ENCODE measurements at regions of chr5 and their contacts with region 1.

Region 1: GRCh38 chr5:91419571-91420537 is 36.7 kb upstream of the ARRDC3 start:
- DNase-seq: peak; percentile 73
- H3K4me3 Mint-ChIP-seq: no peak overlapping the region
- H3K27ac Mint-ChIP-seq: no peak overlapping the region
- H3K4me1 Mint-ChIP-seq: no peaks in the 10 kb centered on the region
- H3K27me3 Mint-ChIP-seq: no peaks in the 10 kb centered on the region
- CTCF ChIP-seq: peak; percentile 75

Region 2: GRCh38 chr5:90014420-90014819 is 1405.4 kb before region 1 on chr5:
- CTCF ChIA-PET with region 1: no interaction called
- POLR2A ChIA-PET with region 1: no interaction called
- intact Hi-C with region 1: no loop called
- DNase-seq: no peak
- H3K4me3 Mint-ChIP-seq: no peak overlapping the region
- H3K27ac Mint-ChIP-seq: no peak overlapping the region
- H3K4me1 Mint-ChIP-seq: peaks cover 8% of the 10 kb centered on the region
- H3K27me3 Mint-ChIP-seq: no peaks in the 10 kb centered on the region
- CTCF ChIP-seq: no peak

Region 3: GRCh38 chr5:90326995-90327394 is 1092.9 kb before region 1 on chr5:
- CTCF ChIA-PET with region 1: no interaction called
- POLR2A ChIA-PET with region 1: no interaction called
- intact Hi-C with region 1: no loop called
- DNase-seq: no peak
- H3K4me3 Mint-ChIP-seq: no peak overlapping the region
- H3K27ac Mint-ChIP-seq: no peak overlapping the region
- H3K4me1 Mint-ChIP-seq: no peaks in the 10 kb centered on the region
- H3K27me3 Mint-ChIP-seq: peaks cover 55% of the 10 kb centered on the region
- CTCF ChIP-seq: no peak

Region 4: DNA sequence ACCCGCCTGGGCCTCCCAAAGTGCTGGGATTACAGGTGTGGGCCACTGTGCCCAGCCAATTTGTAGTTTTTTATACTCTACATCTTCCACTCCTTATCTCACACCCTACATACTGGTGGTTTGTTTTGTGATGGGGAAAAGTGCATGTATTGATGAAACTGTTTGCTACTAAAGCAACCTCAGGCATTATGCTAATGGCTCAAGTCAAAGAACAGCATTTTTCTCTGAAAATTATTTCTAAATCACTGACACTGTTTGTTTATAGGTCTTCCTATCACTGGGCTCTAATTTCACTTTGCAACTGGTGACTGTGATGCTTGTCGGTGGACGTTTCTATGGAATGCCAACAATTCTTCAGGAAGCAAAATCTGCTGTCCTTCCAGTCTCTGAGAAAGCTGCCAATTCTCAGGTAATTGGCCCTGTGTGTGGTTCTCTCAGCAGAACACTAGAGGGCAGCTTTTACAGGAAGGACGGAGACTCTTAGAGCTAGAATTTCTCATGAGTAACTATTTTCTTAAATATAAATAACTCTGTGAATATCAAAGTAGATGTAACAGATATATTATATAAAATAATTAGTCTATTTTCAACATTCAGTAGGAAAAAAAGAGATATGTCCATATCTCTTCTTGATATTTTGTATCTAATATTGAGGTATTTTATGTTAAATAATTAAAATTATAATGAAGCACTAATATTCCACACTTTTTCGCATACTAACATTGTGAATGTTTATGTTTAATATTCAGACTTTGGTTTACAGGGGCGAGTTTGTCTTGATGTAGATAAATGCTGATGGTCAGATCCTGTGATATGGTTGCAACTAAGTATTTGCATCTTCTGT is 617.2 kb before region 1 on chr5:
- CTCF ChIA-PET with region 1: interaction called, 67 read pairs
- POLR2A ChIA-PET with region 1: no interaction called
- intact Hi-C with region 1: loop called (anchors 5 kb)
- DNase-seq: peak; percentile 62
- H3K4me3 Mint-ChIP-seq: no peak overlapping the region
- H3K27ac Mint-ChIP-seq: no peak overlapping the region
- H3K4me1 Mint-ChIP-seq: no peaks in the 10 kb centered on the region
- H3K27me3 Mint-ChIP-seq: peaks cover 14% of the 10 kb centered on the region
- CTCF ChIP-seq: peak; percentile 65

Region 5: GRCh38 chr5:90866333-90866732 is 553.5 kb before region 1 on chr5:
- CTCF ChIA-PET with region 1: interaction called, 64 read pairs
- POLR2A ChIA-PET with region 1: interaction called, 4 read pairs
- intact Hi-C with region 1: loop called (anchors 1 kb)
- DNase-seq: peak; percentile 29
- H3K4me3 Mint-ChIP-seq: no peak overlapping the region
- H3K27ac Mint-ChIP-seq: no peak overlapping the region
- H3K4me1 Mint-ChIP-seq: no peaks in the 10 kb centered on the region
- H3K27me3 Mint-ChIP-seq: no peaks in the 10 kb centered on the region
- CTCF ChIP-seq: peak; percentile 39

Region 6: DNA sequence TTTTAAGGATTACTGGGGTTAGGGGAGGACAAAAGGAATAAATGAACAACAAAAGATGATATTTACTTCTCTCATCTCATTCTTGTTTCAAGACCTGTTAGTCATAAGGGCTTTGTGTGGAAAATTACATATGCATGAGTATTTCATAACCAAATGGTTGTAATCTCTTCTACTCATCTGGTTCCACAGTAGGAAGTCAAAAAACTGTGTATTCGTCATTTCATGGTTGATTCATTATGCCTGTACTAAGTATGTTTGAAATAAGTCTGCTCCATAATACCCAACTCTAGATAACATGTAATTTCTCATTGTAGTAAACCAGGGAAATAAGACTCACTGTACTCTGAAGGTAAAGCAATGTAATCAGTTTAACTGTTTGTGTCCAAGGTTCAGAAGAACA is 249.6 kb before region 1 on chr5:
- CTCF ChIA-PET with region 1: no interaction called
- POLR2A ChIA-PET with region 1: no interaction called
- intact Hi-C with region 1: no loop called
- DNase-seq: peak; percentile 39
- H3K4me3 Mint-ChIP-seq: no peak overlapping the region
- H3K27ac Mint-ChIP-seq: peak overlapping the region; percentile 8
- H3K4me1 Mint-ChIP-seq: peaks cover 9% of the 10 kb centered on the region
- H3K27me3 Mint-ChIP-seq: no peaks in the 10 kb centered on the region
- CTCF ChIP-seq: no peak

Region 7: GRCh38 chr5:91225848-91226686 is 193.8 kb before region 1 on chr5:
- CTCF ChIA-PET with region 1: interaction called, 7 read pairs
- POLR2A ChIA-PET with region 1: no interaction called
- intact Hi-C with region 1: loop called (anchors 1 kb)
- DNase-seq: peak; percentile 70
- H3K4me3 Mint-ChIP-seq: no peak overlapping the region
- H3K27ac Mint-ChIP-seq: no peak overlapping the region
- H3K4me1 Mint-ChIP-seq: peaks cover 22% of the 10 kb centered on the region
- H3K27me3 Mint-ChIP-seq: no peaks in the 10 kb centered on the region
- CTCF ChIP-seq: peak; percentile 65

Region 8: GRCh38 chr5:91434348-91434747 is 14.5 kb after region 1 on chr5:
- CTCF ChIA-PET with region 1: interaction called, 74 read pairs
- POLR2A ChIA-PET with region 1: interaction called, 3 read pairs
- intact Hi-C with region 1: no loop called
- DNase-seq: peak; percentile 5
- H3K4me3 Mint-ChIP-seq: no peak overlapping the region
- H3K27ac Mint-ChIP-seq: no peak overlapping the region
- H3K4me1 Mint-ChIP-seq: no peaks in the 10 kb centered on the region
- H3K27me3 Mint-ChIP-seq: no peaks in the 10 kb centered on the region
- CTCF ChIP-seq: no peak